ENCODE measurements at regions of chr15 and their contacts with region 1.

Region 1: DNA sequence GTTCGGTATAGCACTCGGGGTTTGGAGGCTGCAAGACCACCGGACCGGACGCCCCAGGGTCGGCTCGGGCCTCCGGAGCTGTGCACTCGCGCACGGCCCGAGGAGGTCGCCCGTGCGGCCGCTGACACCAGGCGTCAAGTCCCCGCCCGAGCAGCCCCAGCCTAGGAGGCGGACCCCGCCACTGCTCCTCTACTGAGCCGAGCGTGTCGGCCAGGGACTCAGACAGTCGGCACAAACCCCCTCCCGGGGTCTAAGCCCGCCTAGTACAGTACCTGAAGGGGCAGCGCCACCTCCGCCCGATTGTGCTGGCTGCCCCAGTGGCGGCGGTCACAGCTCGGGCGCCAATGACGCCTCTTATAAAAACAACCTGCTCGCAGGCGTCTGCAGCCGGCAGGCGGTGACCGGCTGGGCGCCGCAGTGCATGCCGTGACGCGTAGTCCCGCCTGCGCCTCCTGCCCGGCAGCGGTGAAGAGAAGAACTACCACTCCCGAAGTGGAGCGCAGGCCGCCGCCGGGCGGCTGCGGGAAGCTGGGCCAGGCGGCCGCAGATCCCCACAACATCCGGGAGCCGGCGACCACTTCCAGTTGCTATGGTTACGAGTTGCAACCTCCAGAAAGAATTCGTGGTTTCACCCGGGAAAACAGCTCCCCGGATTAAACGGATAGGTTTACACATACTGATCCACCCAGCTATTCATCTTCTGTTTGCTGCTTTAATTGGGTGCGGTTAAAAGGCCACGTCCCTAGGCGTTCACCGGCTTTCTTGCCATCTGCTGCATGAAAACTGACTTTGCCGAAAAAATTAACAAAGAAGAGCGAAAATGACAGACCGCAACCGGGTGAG is at the starts of genes CCPG1 and PIERCE2:
- DNase-seq: peak; percentile 87 to 91 (median 89)
- H3K4me3 ChIP-seq: peak within 1 kb of the TSS; percentile 83 to 96 (median 89)
- H3K4me3 Mint-ChIP-seq: peak within 1 kb of the TSS; percentile 85 to 97
- H3K27ac ChIP-seq: peak within 1 kb of the TSS; percentile 92
- H3K27ac Mint-ChIP-seq: peak within 1 kb of the TSS; percentile 89 to 97 (median 94)
- H3K4me1 ChIP-seq: peaks cover 41 to 52% of the 10 kb centered on the region in 2 donors
- H3K4me1 Mint-ChIP-seq: peaks cover 46% of the 10 kb centered on the region
- H3K27me3 ChIP-seq: no peaks in the 10 kb centered on the region
- H3K27me3 Mint-ChIP-seq: no peaks in the 10 kb centered on the region
- CTCF ChIP-seq: peak; percentile 90
- polyA plus RNA-seq, gene CCPG1: 21.1 to 196 (median 145) TPM
- polyA plus RNA-seq, gene PIERCE2: 0.13 to 1.3 (median 0.61) TPM

Region 2: DNA sequence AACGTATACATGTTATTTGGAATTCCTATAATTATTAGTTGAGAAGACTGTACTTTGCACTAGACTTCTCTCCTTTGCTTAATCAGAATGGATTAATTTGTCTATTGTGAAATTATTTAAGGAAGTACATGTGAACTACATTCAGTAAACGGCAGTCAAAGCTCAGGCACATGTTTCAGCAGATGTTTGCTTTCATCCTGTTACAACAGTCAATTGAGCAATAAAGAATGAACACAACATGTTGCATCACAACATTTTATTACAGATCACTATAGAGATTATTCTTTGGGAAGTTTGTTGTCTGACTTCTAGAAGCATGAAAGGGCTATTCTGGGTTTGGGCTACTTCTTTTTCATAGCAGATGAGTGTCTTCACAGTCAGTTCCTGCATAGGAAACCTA is 157.8 kb before region 1 on chr15:
- intact Hi-C with region 1: no loop called
- DNase-seq: peak; percentile 89 to 98 (median 94)
- H3K4me3 ChIP-seq: peak overlapping the region in 1 of 3 experiments; percentile 58
- H3K4me3 Mint-ChIP-seq: peak overlapping the region in 1 of 2 donors; percentile 70
- H3K27ac ChIP-seq: peak overlapping the region; percentile 91 to 94
- H3K27ac Mint-ChIP-seq: peak overlapping the region; percentile 91 to 99 (median 97)
- H3K4me1 ChIP-seq: peaks cover 94% of the 10 kb centered on the region in 2 donors
- H3K4me1 Mint-ChIP-seq: peaks cover 89% of the 10 kb centered on the region
- H3K27me3 ChIP-seq: no peaks in the 10 kb centered on the region
- H3K27me3 Mint-ChIP-seq: peaks cover 0 to 2% (median 0%) of the 10 kb centered on the region in 3 donors
- CTCF ChIP-seq: no peak

Region 3: GRCh38 chr15:55318588-55319494 is 89.3 kb before region 1 on chr15 and contains the starts of genes PIGB and PIGBOS1:
- intact Hi-C with region 1: loop called (anchors 5 to 10 kb)
- DNase-seq: peak; percentile 81 to 84 (median 83)
- H3K4me3 ChIP-seq: peak within 1 kb of the TSS; percentile 64 to 96 (median 66)
- H3K4me3 Mint-ChIP-seq: peak within 1 kb of the TSS; percentile 91 to 98
- H3K27ac ChIP-seq: peak within 1 kb of the TSS; percentile 89 to 100
- H3K27ac Mint-ChIP-seq: peak within 1 kb of the TSS; percentile 99 to 100 (median 100)
- H3K4me1 ChIP-seq: peaks cover 39 to 66% of the 10 kb centered on the region in 2 donors
- H3K4me1 Mint-ChIP-seq: peaks cover 64% of the 10 kb centered on the region
- H3K27me3 ChIP-seq: no peaks in the 10 kb centered on the region
- H3K27me3 Mint-ChIP-seq: no peaks in the 10 kb centered on the region
- CTCF ChIP-seq: peak; percentile 9
- polyA plus RNA-seq, gene PIGB: 15.3 to 16.8 (median 15.8) TPM
- polyA plus RNA-seq, gene PIGBOS1: 29.4 to 69.7 (median 67.3) TPM

Measured in CD14-positive monocyte (primary cell).